ENCODE measurements at regions of chr7 and their contacts with region 1.

Region 1: DNA sequence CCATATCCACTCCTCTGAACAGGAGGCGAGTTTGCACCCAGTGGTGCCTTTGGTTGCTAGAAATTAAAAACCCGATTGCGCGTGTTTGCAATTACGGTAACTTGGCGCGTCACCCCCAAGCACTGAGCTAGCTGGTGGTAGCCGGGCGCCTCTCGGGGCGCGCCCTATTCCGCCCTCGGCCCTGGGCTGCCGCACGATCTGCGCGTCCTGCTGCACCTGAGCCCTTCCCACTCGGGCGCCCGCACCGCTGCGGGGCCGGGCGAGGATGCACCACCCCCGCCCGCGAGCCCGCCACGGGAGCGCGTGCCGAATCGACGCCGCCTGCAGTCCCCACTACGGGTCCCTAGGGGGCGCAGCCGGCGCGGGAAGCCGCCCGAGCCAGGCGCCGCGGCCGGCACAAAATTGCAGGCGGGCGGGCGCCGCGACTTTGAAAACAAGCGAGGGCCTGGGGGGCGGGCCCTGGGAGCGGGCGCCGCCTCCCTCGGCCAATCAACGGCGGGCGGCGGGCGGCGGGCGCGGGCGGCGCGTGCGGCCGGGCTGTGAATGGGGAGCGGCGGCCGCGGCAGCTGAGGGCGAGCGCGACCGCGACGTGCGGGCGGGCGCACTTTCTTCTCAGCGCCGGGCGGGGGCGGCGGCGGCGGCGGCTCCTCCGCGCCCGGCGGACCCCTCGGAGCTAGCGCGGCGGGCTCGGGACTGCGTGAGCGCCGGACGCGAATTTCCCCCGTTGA is at the start of gene SDK1:
- DNase-seq: peak; percentile 96
- ATAC-seq: peak; percentile 97
- total RNA-seq, gene SDK1: 2.3 TPM

Region 2: GRCh38 chr7:3218411-3219225 is 82.2 kb before region 1 on chr7:
- intact Hi-C with region 1: loop called (anchors 5 kb)
- DNase-seq: no peak
- ATAC-seq: no peak

Region 3: GRCh38 chr7:3673524-3673923 is 372.7 kb after region 1 on chr7:
- intact Hi-C with region 1: loop called (anchors 5 kb)
- DNase-seq: no peak
- ATAC-seq: no peak

Region 4: DNA sequence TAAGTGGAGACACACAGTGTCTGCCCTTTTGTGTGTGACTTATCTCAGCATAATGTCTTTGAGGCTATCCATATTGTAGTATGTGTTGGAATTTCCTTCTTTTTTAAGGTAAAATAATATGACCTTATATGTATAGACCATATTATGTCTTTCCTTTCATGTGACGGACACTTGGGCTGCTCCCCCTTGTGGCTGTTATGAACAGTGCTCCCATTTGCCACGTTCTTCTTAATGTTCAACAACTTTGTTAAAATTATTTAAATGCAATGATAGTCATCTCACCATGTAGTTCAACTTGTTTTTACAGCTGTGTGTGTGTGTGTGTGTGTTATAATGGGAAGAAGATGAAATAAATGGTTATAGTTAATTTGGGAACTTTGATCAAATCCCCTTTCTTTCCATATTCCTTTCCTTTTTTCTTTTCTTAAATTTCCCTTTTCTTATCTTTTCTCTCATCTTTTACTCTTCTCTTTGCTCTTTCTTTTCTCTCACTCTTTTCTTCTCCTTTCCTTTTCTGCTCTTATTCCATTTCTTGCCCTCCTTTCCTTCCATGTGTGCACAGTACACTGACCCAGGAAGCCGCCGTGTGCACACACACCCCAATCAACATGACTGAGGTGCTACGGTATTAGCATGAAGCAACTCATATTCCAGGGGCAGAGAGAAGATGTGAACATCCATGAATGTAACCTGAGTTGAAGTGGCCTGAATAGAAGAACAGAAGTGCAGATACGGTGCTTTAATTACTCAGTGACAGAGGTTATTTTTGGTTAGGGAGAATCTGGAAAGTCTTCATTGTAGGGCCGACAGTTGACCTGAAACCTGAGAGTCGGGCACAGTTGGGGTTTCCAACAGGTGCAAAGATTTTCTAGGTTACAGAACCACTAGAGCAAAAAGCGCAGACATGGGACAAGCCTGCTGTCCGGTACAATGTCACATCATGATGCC is 596.9 kb after region 1 on chr7:
- intact Hi-C with region 1: loop called (anchors 5 kb)
- DNase-seq: no peak
- ATAC-seq: no peak

Measured in Right ventricle myocardium inferior (tissue), 1 donor.